ENCODE measurements at regions of chr2 and their contacts with region 1.

Region 1: GRCh38 chr2:72862239-72862988 is 24.8 kb upstream of the SPR start:
- DNase-seq: peak; percentile 93
- ATAC-seq: peak; percentile 92
- H3K4me3 Mint-ChIP-seq: peak overlapping the region; percentile 36
- H3K27ac Mint-ChIP-seq: peak overlapping the region; percentile 2
- H3K4me1 Mint-ChIP-seq: peaks cover 10% of the 10 kb centered on the region
- H3K27me3 Mint-ChIP-seq: peaks cover 50% of the 10 kb centered on the region

Region 2: GRCh38 chr2:72770879-72771461 is 91.4 kb before region 1 on chr2:
- CTCF ChIA-PET with region 1: interaction called, 42 read pairs
- POLR2A ChIA-PET with region 1: no interaction called
- intact Hi-C with region 1: loop called (anchors 1 kb)
- DNase-seq: peak; percentile 71
- ATAC-seq: no peak
- H3K4me3 Mint-ChIP-seq: no peak overlapping the region
- H3K27ac Mint-ChIP-seq: no peak overlapping the region
- H3K4me1 Mint-ChIP-seq: no peaks in the 10 kb centered on the region
- H3K27me3 Mint-ChIP-seq: no peaks in the 10 kb centered on the region

Region 3: GRCh38 chr2:72825241-72826155 is 36.9 kb before region 1 on chr2 and contains the start of gene EXOC6B:
- CTCF ChIA-PET with region 1: interaction called, 9 read pairs
- POLR2A ChIA-PET with region 1: no interaction called
- intact Hi-C with region 1: loop called (anchors 1 to 5 kb)
- DNase-seq: peak; percentile 91
- ATAC-seq: peak; percentile 80
- H3K4me3 Mint-ChIP-seq: peak within 1 kb of the TSS; percentile 93
- H3K27ac Mint-ChIP-seq: peak within 1 kb of the TSS; percentile 75
- H3K4me1 Mint-ChIP-seq: peaks cover 40% of the 10 kb centered on the region
- H3K27me3 Mint-ChIP-seq: peaks cover 2% of the 10 kb centered on the region
- total RNA-seq, gene EXOC6B: 7.0 to 9.0 TPM

Region 4: DNA sequence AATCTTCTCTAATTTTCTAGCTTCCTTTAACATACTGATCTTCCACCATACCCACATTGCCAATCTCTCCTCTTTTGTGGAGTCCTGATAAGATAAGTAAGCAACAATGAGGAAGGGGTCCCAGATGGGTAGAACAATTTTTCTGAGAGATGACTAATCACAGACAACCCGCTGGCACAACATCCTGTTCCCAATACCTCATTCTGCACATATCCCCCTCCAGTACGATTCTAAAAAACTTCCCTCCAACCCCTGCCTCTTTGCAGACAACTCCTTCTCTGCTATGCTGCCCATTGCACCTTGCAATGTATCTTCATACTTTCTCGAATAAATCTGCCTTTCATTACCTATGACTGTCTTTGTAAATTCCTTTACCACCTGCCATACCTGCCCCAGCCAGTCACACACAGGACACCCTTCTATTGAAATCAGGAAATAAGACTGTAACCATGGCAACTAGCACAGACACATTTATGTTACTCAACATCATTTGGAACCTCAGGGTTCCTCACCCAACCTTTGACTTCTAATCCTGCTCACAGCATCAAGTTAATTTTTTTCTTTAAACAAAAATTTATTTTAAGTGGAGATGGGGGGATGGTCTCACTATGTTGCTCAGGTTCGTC is 29.2 kb before region 1 on chr2:
- CTCF ChIA-PET with region 1: interaction called, 12 read pairs
- POLR2A ChIA-PET with region 1: no interaction called
- intact Hi-C with region 1: loop called in 1 of 2 experiments (anchors 5 kb)
- DNase-seq: no peak
- ATAC-seq: peak; percentile 64
- H3K4me3 Mint-ChIP-seq: no peak overlapping the region
- H3K27ac Mint-ChIP-seq: no peak overlapping the region
- H3K4me1 Mint-ChIP-seq: peaks cover 5% of the 10 kb centered on the region
- H3K27me3 Mint-ChIP-seq: peaks cover 2% of the 10 kb centered on the region

Region 5: GRCh38 chr2:72915907-72916742 is 53.7 kb after region 1 on chr2:
- CTCF ChIA-PET with region 1: interaction called, 4 read pairs
- POLR2A ChIA-PET with region 1: interaction called, 6 read pairs
- intact Hi-C with region 1: loop called (anchors 2 to 5 kb)
- DNase-seq: peak; percentile 74
- ATAC-seq: peak; percentile 60
- H3K4me3 Mint-ChIP-seq: peak overlapping the region; percentile 64
- H3K27ac Mint-ChIP-seq: no peak overlapping the region
- H3K4me1 Mint-ChIP-seq: peaks cover 30% of the 10 kb centered on the region
- H3K27me3 Mint-ChIP-seq: peaks cover 71% of the 10 kb centered on the region

Region 6: GRCh38 chr2:72924353-72925240 is 62.2 kb after region 1 on chr2:
- CTCF ChIA-PET with region 1: interaction called, 5 read pairs
- POLR2A ChIA-PET with region 1: no interaction called
- intact Hi-C with region 1: loop called in 1 of 2 experiments (anchors 5 kb)
- DNase-seq: peak; percentile 38
- ATAC-seq: peak; percentile 13
- H3K4me3 Mint-ChIP-seq: no peak overlapping the region
- H3K27ac Mint-ChIP-seq: no peak overlapping the region
- H3K4me1 Mint-ChIP-seq: peaks cover 7% of the 10 kb centered on the region
- H3K27me3 Mint-ChIP-seq: peaks cover 43% of the 10 kb centered on the region